ENCODE measurements at regions of chr11 and their contacts with region 1.

Region 1: GRCh38 chr11:91591026-91591425 is 633.6 kb upstream of the FAT3 start:
- DNase-seq: no peak
- ATAC-seq: no peak
- H3K4me3 ChIP-seq: no peak overlapping the region
- H3K27ac ChIP-seq: no peak overlapping the region
- H3K4me1 ChIP-seq: no peaks in the 10 kb centered on the region
- H3K27me3 ChIP-seq: no peaks in the 10 kb centered on the region
- CTCF ChIP-seq: no peak
- EP300 ChIP-seq: no peak
- POLR2A ChIP-seq: no peak
- RAD21 ChIP-seq: no peak

Region 2: DNA sequence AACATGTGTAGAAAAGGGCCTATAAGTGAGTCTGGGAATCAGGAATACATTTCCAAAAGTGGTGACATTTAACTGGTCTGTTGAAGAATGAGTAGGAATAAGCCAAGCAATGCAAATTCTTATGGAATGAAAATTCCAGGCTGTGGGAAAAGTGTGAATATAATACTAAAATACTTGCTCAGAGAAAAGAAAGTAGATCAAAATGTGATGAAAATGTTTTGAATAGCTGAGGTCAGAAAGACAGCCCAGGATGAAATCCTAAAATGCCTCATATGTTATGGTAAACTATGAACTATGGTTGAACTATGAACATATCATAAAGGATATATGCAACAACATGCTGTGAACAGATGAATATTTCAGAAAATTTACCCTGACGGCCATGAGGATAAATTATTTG is 54.7 kb before region 1 on chr11:
- CTCF ChIA-PET with region 1: no interaction called
- POLR2A ChIA-PET with region 1: no interaction called
- in situ Hi-C with region 1: no loop called
- intact Hi-C with region 1: loop called (anchors 10 kb)
- DNase-seq: no peak
- ATAC-seq: no peak
- H3K4me3 ChIP-seq: no peak overlapping the region
- H3K27ac ChIP-seq: no peak overlapping the region
- H3K4me1 ChIP-seq: no peaks in the 10 kb centered on the region
- H3K27me3 ChIP-seq: no peaks in the 10 kb centered on the region
- CTCF ChIP-seq: no peak
- EP300 ChIP-seq: no peak
- POLR2A ChIP-seq: no peak
- RAD21 ChIP-seq: no peak

Measured in K562 (cell line).